Dorsolateral prefrontal cortex (tissue), 120 donors: ENCODE measurements at regions of chr16 and their contacts with region 1.

Region 1: DNA sequence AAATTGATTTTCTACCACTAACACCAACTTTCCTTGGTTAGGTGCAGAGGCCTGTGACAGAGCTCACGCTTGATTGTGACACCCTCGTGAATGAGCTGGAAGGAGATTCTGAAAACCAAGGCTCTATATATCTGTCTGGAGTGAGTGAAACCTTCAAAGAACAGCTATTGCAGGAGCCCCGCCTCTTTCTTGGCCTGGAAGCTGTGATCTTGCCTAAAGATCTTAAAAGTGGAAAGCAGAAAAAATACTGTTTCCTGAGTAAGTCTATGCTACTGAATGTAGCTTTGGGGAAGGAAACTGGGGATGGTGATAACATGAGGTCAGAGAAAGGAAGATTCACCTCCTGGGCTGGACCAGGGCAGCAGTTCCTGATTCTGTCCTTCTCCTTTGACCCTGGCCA is 38.3 kb downstream of the REXO5 start:
- DNase-seq: no peak
- H3K4me3 ChIP-seq: no peak overlapping the region
- H3K27ac ChIP-seq: no peak overlapping the region
- H3K27me3 ChIP-seq: no peaks in the 10 kb centered on the region
- CTCF ChIP-seq: no peak

Region 2: DNA sequence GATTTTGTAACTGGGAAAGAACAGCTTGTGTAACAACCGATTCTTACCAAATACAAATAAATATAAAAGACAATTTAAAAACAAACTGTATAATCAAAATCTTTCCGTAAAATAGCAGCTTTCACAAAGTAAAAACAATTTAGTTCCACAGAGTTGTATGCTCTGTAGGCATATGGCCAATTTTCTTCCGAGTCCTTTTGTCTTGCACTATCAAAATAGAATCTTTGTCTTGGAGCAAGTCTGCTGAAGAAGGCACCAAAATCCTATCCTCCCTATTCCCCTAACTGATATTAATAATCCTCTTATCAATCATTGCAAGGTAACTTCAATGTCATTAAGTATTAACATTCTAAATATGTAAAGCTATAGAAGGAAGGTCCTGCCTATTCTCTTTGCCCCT is 110.5 kb before region 1 on chr16:
- intact Hi-C with region 1: no loop called
- DNase-seq: no peak
- H3K4me3 ChIP-seq: peak overlapping the region in 2 of 59 donors; percentile 0 to 33
- H3K27ac ChIP-seq: peak overlapping the region in 34 of 59 donors; percentile 2 to 69 (median 30)
- H3K27me3 ChIP-seq: no peaks in the 10 kb centered on the region
- CTCF ChIP-seq: no peak

Region 3: GRCh38 chr16:21218153-21218552 is 373.6 kb after region 1 on chr16:
- intact Hi-C with region 1: loop called in 1 of 2 experiments (anchors 5 kb)
- DNase-seq: no peak
- H3K4me3 ChIP-seq: no peak overlapping the region
- H3K27ac ChIP-seq: no peak overlapping the region
- H3K27me3 ChIP-seq: peaks cover 0 to 11% (median 0%) of the 10 kb centered on the region in 45 donors
- CTCF ChIP-seq: no peak